ENCODE measurements at regions of chr22 and their contacts with region 1.

Region 1: DNA sequence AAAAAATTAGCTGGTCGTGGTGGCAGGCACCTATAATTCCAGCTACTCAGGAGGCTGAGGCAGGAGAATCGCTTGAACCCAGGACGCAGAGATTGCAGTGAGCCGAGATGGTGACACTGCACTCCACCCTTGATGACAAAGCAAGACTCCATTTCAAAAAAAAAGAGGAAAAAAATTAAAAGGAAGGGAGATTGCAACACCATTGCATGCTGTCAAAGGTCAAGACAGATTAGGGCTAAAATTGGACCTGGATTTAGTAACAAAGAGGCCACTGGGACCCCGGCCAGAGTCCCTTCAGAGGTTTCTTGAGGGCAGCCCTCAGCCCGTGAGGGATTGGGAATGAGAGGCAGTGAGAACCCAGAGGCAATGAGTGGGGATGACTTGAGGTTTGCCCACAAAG is 8.2 kb upstream of the MAFF start:
- DNase-seq: no peak
- H3K4me3 ChIP-seq: no peak overlapping the region
- H3K27ac ChIP-seq: no peak overlapping the region
- H3K4me1 ChIP-seq: no peaks in the 10 kb centered on the region
- H3K27me3 ChIP-seq: no peaks in the 10 kb centered on the region
- CTCF ChIP-seq: no peak

Region 2: GRCh38 chr22:38143036-38143697 is 50.4 kb before region 1 on chr22:
- CTCF ChIA-PET with region 1: no interaction called
- dilution Hi-C with region 1: loop called (anchors 5 kb)
- in situ Hi-C with region 1: no loop called
- intact Hi-C with region 1: no loop called
- DNase-seq: no peak
- H3K4me3 ChIP-seq: no peak overlapping the region
- H3K27ac ChIP-seq: no peak overlapping the region
- H3K4me1 ChIP-seq: peaks cover 22% of the 10 kb centered on the region
- H3K27me3 ChIP-seq: no peaks in the 10 kb centered on the region
- CTCF ChIP-seq: no peak

Measured in mammary epithelial cell (primary cell).